Ovary (tissue), 10 donors: ENCODE measurements at regions of chr1 and their contacts with region 1.

Region 1: DNA sequence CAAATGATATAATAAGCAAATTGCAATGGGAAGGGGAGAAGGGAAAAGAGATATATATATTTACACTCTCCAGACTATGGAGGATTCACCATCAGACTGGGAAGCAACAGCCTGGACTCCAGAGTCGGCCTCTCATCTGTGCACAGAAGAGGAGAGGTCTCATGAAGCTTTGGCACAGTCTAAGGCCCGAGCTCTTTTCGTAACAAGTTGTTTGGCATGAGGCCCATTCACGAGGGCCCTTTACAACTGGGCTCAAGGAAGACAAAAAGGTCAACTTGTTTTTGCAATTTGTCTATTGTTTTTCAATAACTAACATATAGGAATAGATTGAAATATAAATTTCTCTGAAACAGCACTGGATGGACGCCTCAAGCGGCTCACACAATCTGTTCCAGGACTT is 66.7 kb upstream of the AJAP1 start:
- DNase-seq: no peak
- H3K4me3 ChIP-seq: no peak overlapping the region
- H3K27ac ChIP-seq: no peak overlapping the region
- H3K4me1 ChIP-seq: no peaks in the 10 kb centered on the region
- H3K27me3 ChIP-seq: no peaks in the 10 kb centered on the region
- CTCF ChIP-seq: no peak
- EP300 ChIP-seq: no peak
- POLR2A ChIP-seq: no peak

Region 2: GRCh38 chr1:4227986-4228385 is 359.7 kb before region 1 on chr1:
- intact Hi-C with region 1: no loop called
- DNase-seq: no peak
- H3K4me3 ChIP-seq: no peak overlapping the region
- H3K27ac ChIP-seq: no peak overlapping the region
- H3K4me1 ChIP-seq: no peaks in the 10 kb centered on the region
- H3K27me3 ChIP-seq: no peaks in the 10 kb centered on the region
- CTCF ChIP-seq: no peak
- EP300 ChIP-seq: no peak
- POLR2A ChIP-seq: no peak

Region 3: GRCh38 chr1:4549930-4550329 is 37.8 kb before region 1 on chr1:
- intact Hi-C with region 1: no loop called
- DNase-seq: no peak
- H3K4me3 ChIP-seq: no peak overlapping the region
- H3K27ac ChIP-seq: no peak overlapping the region
- H3K4me1 ChIP-seq: no peaks in the 10 kb centered on the region
- H3K27me3 ChIP-seq: no peaks in the 10 kb centered on the region
- CTCF ChIP-seq: no peak
- EP300 ChIP-seq: no peak
- POLR2A ChIP-seq: no peak

Region 4: GRCh38 chr1:4565801-4566200 is 21.9 kb before region 1 on chr1:
- intact Hi-C with region 1: loop called in 1 of 4 experiments (anchors 2 kb)
- DNase-seq: no peak
- H3K4me3 ChIP-seq: no peak overlapping the region
- H3K27ac ChIP-seq: no peak overlapping the region
- H3K4me1 ChIP-seq: no peaks in the 10 kb centered on the region
- H3K27me3 ChIP-seq: no peaks in the 10 kb centered on the region
- CTCF ChIP-seq: no peak
- EP300 ChIP-seq: no peak
- POLR2A ChIP-seq: no peak